ENCODE measurements at regions of chr19 and their contacts with region 1.

Region 1: GRCh38 chr19:29662604-29663404 is 2.5 kb upstream of the PLEKHF1 start:
- DNase-seq: peak; percentile 70
- ATAC-seq: peak; percentile 30
- H3K4me3 ChIP-seq: peak overlapping the region; percentile 56; the same call in 1 of the 2 replicates
- H3K27ac ChIP-seq: peak overlapping the region; percentile 94
- H3K4me1 ChIP-seq: peaks cover 40% of the 10 kb centered on the region
- H3K27me3 ChIP-seq: no peaks in the 10 kb centered on the region
- CTCF ChIP-seq: no peak

Region 2: DNA sequence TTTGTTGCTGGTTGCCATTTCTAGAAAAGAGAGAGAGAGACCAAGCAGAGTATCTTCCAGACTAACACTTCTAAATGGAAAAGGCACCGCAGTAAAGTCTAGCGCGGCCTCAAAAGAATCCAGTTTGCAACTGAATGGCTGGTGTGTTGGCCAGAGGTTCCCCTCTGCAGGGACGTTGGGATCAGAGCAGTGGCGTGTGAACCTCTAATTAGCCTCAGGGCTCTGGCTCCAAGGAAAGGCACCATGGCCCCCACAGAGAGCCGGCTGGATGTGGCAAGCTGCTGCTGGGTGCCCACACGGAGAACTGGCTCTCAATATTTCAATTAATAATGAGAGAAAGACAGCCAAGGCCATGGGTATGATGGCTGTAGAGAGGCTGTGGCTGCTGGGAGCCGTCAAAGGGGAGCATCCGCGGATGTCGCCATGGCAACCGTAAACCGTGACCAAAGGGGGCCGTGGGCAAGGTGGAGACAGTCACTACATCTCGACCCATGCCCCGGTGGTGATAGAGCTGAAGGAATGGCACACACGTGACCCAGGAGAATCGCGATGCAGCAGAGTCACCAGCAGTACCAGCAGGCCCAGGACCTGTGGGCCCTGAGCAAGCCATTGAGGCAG is 127.5 kb before region 1 on chr19:
- CTCF ChIA-PET with region 1: no interaction called
- POLR2A ChIA-PET with region 1: no interaction called
- intact Hi-C with region 1: no loop called
- DNase-seq: no peak
- ATAC-seq: no peak
- H3K4me3 ChIP-seq: no peak overlapping the region
- H3K27ac ChIP-seq: no peak overlapping the region
- H3K4me1 ChIP-seq: no peaks in the 10 kb centered on the region
- H3K27me3 ChIP-seq: peaks cover 5% of the 10 kb centered on the region; the same call in 1 of the 2 replicates
- CTCF ChIP-seq: no peak

Region 3: GRCh38 chr19:29622138-29623070 is 40.4 kb before region 1 on chr19:
- CTCF ChIA-PET with region 1: no interaction called
- POLR2A ChIA-PET with region 1: no interaction called
- intact Hi-C with region 1: loop called (anchors 5 kb)
- DNase-seq: peak; percentile 12
- ATAC-seq: no peak
- H3K4me3 ChIP-seq: no peak overlapping the region
- H3K27ac ChIP-seq: no peak overlapping the region
- H3K4me1 ChIP-seq: no peaks in the 10 kb centered on the region
- H3K27me3 ChIP-seq: no peaks in the 10 kb centered on the region
- CTCF ChIP-seq: no peak

Measured in PC-3 (cell line).